Activated CD8-positive, alpha-beta memory T cell treated with anti-CD3 and anti-CD28 coated beads, Interleukin-2, amount 10 ng/mL, durations not matched to agents 7 days and 5 days (primary cell): ENCODE measurements at regions of chr1 and their contacts with region 1.

Region 1: DNA sequence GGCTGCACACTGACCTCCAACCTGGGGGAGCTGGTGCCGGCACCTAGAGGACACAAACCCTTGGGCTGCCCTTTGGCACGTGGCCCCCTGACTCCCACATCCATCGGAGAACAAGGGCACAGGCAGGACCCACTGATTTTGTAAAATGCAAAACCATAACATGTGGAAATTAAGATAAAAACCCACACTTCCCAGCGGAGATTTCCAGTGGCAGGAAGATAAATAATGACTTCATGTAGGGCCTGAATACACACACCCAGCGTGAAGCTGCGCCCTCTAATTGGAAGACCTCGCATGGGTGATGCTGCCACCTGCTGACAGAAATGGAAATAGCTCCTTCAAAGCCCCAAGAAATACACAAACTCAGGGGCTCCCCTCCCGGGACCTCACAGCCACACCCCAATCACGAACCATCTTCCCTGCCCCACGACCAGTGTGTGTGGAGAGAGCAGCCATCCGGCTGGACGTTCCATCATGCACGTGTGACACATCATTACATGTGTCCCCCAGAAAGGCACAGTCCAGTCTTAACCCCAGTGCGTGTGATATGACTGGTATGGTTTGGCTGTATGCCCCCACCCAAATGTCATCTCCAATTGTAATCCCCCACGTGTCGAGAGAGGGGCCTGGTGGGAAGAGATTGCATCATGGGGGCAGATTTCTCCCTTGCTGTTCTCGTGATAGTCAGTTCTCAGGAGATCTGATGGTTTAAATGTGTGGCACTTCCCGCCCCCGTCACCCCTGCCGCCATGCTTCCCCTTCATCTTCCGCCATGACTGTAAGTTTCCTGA is 5.7 kb upstream of the TPRG1L start:
- DNase-seq: peak; percentile 78
- ATAC-seq: peak; percentile 87
- H3K4me3 Mint-ChIP-seq: no peak overlapping the region
- H3K27ac Mint-ChIP-seq: no peak overlapping the region
- H3K4me1 Mint-ChIP-seq: peaks cover 15% of the 10 kb centered on the region
- H3K27me3 Mint-ChIP-seq: peaks cover 6% of the 10 kb centered on the region

Region 2: GRCh38 chr1:3126756-3127597 is 492.1 kb before region 1 on chr1:
- CTCF ChIA-PET with region 1: no interaction called
- DNase-seq: no peak
- ATAC-seq: no peak
- H3K4me3 Mint-ChIP-seq: no peak overlapping the region
- H3K27ac Mint-ChIP-seq: no peak overlapping the region
- H3K4me1 Mint-ChIP-seq: no peaks in the 10 kb centered on the region
- H3K27me3 Mint-ChIP-seq: no peaks in the 10 kb centered on the region

Region 3: GRCh38 chr1:3453203-3453761 is 165.8 kb before region 1 on chr1:
- CTCF ChIA-PET with region 1: interaction called, 49 read pairs
- DNase-seq: peak; percentile 74
- ATAC-seq: peak; percentile 80
- H3K4me3 Mint-ChIP-seq: no peak overlapping the region
- H3K27ac Mint-ChIP-seq: no peak overlapping the region
- H3K4me1 Mint-ChIP-seq: no peaks in the 10 kb centered on the region
- H3K27me3 Mint-ChIP-seq: peaks cover 16% of the 10 kb centered on the region

Region 4: GRCh38 chr1:3491291-3492246 is 127.5 kb before region 1 on chr1:
- CTCF ChIA-PET with region 1: interaction called, 53 read pairs
- DNase-seq: peak; percentile 82
- ATAC-seq: peak; percentile 87
- H3K4me3 Mint-ChIP-seq: no peak overlapping the region
- H3K27ac Mint-ChIP-seq: no peak overlapping the region
- H3K4me1 Mint-ChIP-seq: peaks cover 2% of the 10 kb centered on the region
- H3K27me3 Mint-ChIP-seq: no peaks in the 10 kb centered on the region

Region 5: GRCh38 chr1:3564921-3565827 is 53.9 kb before region 1 on chr1:
- CTCF ChIA-PET with region 1: interaction called, 66 read pairs
- DNase-seq: no peak
- ATAC-seq: no peak
- H3K4me3 Mint-ChIP-seq: no peak overlapping the region
- H3K27ac Mint-ChIP-seq: no peak overlapping the region
- H3K4me1 Mint-ChIP-seq: no peaks in the 10 kb centered on the region
- H3K27me3 Mint-ChIP-seq: no peaks in the 10 kb centered on the region

Region 6: GRCh38 chr1:3631330-3632262 is 12.5 kb after region 1 on chr1:
- CTCF ChIA-PET with region 1: interaction called, 24 read pairs
- DNase-seq: no peak
- ATAC-seq: no peak
- H3K4me3 Mint-ChIP-seq: no peak overlapping the region
- H3K27ac Mint-ChIP-seq: no peak overlapping the region
- H3K4me1 Mint-ChIP-seq: peaks cover 4% of the 10 kb centered on the region
- H3K27me3 Mint-ChIP-seq: no peaks in the 10 kb centered on the region

Region 7: DNA sequence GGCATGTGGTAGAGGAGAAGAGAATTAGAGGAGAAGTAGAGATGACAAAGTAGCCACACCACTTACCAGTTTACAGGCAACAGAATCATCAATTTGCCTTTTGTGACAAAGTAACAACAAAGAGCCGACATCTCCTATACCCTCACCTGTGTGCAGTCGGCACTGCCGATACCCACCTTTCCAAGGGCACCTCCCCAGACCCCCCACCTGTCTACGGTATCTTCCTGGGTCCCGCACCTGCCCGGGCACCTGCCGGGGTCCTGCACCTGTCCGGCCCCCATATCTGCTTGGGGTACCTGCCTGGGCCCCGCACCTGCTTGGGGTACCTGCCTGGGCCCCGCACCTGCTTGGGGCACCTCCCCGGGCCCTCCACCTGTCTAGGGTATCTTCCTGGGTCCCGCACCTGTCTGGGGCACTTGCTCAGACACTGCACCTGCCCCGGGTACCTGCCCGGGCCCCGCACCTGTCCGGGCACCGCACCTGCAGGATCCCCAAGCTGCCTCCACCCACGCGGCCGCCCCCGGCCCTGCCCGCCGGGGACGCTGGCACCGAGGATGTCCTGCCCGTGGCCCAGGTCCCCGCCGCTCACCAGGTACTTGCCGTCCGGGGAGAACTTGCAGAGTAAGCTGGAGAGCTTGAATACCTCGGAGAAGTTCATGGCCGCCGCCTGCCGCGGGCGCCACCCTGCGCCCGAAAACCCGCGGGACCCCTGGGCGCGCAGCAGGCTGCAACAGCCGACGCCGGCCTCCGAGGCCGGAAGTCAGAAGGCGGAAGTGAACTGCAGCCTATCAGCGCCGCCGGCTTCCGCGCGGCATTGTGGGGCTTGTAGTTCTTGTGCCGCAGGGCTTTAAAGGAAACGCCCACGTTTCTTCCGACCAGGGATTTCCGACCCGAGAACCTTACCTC is 30.5 kb after region 1 on chr1 and contains the start of gene WRAP73:
- CTCF ChIA-PET with region 1: interaction called, 11 read pairs
- DNase-seq: peak; percentile 93
- ATAC-seq: peak; percentile 98
- H3K4me3 Mint-ChIP-seq: peak within 1 kb of the TSS; percentile 76
- H3K27ac Mint-ChIP-seq: peak within 1 kb of the TSS; percentile 71
- H3K4me1 Mint-ChIP-seq: peaks cover 22% of the 10 kb centered on the region
- H3K27me3 Mint-ChIP-seq: peaks cover 32% of the 10 kb centered on the region
- total RNA-seq, gene WRAP73: 38.1 to 43.8 TPM